ENCODE measurements at regions of chr5 and their contacts with region 1.

Region 1: GRCh38 chr5:140710899-140711552 is 10.8 kb downstream of the ZMAT2 start:
- DNase-seq: peak; percentile 95
- ATAC-seq: peak; percentile 94
- H3K4me3 Mint-ChIP-seq: peak overlapping the region; percentile 96
- H3K27ac Mint-ChIP-seq: peak overlapping the region; percentile 93
- H3K4me1 Mint-ChIP-seq: peaks cover 18% of the 10 kb centered on the region
- H3K27me3 Mint-ChIP-seq: peaks cover 5% of the 10 kb centered on the region

Region 2: GRCh38 chr5:140401362-140402257 is 309.4 kb before region 1 on chr5 and contains the start of gene ANKHD1:
- CTCF ChIA-PET with region 1: no interaction called
- POLR2A ChIA-PET with region 1: no interaction called
- DNase-seq: peak; percentile 99
- ATAC-seq: peak; percentile 88
- H3K4me3 Mint-ChIP-seq: no peak within 1 kb of the TSS
- H3K27ac Mint-ChIP-seq: no peak within 1 kb of the TSS
- H3K4me1 Mint-ChIP-seq: peaks cover 33% of the 10 kb centered on the region
- H3K27me3 Mint-ChIP-seq: no peaks in the 10 kb centered on the region
- total RNA-seq, gene ANKHD1: 108 to 112 TPM

Region 3: GRCh38 chr5:140700177-140701144 is 10.6 kb before region 1 on chr5 and contains the start of gene ZMAT2:
- CTCF ChIA-PET with region 1: interaction called, 6 read pairs
- POLR2A ChIA-PET with region 1: interaction called, 22 read pairs
- DNase-seq: peak; percentile 98
- ATAC-seq: peak; percentile 99
- H3K4me3 Mint-ChIP-seq: peak within 1 kb of the TSS; percentile 96
- H3K27ac Mint-ChIP-seq: peak within 1 kb of the TSS; percentile 92
- H3K4me1 Mint-ChIP-seq: peaks cover 20% of the 10 kb centered on the region
- H3K27me3 Mint-ChIP-seq: no peaks in the 10 kb centered on the region
- total RNA-seq, gene ZMAT2: 43.3 to 47.4 TPM

Measured in activated CD8-positive, alpha-beta T cell treated with anti-CD3 and anti-CD28 coated beads, Interleukin-2, amount 10 ng/mL, durations not matched to agents 7 days and 5 days (primary cell).